Breast epithelium (tissue), 4 donors: ENCODE measurements at regions of chr16 and their contacts with region 1.

Region 1: GRCh38 chr16:58225964-58226602 is 28.2 kb upstream of the CSNK2A2 start:
- DNase-seq: no peak
- H3K4me3 ChIP-seq: no peak overlapping the region
- H3K27ac ChIP-seq: no peak overlapping the region
- H3K4me1 ChIP-seq: no peaks in the 10 kb centered on the region
- H3K27me3 ChIP-seq: no peaks in the 10 kb centered on the region
- CTCF ChIP-seq: no peak
- POLR2A ChIP-seq: no peak

Region 2: GRCh38 chr16:57748596-57748995 is 477.5 kb before region 1 on chr16:
- intact Hi-C with region 1: loop called (anchors 5 kb)
- DNase-seq: no peak
- H3K4me3 ChIP-seq: no peak overlapping the region
- H3K27ac ChIP-seq: no peak overlapping the region
- H3K4me1 ChIP-seq: no peaks in the 10 kb centered on the region
- H3K27me3 ChIP-seq: no peaks in the 10 kb centered on the region
- CTCF ChIP-seq: no peak
- POLR2A ChIP-seq: no peak

Region 3: DNA sequence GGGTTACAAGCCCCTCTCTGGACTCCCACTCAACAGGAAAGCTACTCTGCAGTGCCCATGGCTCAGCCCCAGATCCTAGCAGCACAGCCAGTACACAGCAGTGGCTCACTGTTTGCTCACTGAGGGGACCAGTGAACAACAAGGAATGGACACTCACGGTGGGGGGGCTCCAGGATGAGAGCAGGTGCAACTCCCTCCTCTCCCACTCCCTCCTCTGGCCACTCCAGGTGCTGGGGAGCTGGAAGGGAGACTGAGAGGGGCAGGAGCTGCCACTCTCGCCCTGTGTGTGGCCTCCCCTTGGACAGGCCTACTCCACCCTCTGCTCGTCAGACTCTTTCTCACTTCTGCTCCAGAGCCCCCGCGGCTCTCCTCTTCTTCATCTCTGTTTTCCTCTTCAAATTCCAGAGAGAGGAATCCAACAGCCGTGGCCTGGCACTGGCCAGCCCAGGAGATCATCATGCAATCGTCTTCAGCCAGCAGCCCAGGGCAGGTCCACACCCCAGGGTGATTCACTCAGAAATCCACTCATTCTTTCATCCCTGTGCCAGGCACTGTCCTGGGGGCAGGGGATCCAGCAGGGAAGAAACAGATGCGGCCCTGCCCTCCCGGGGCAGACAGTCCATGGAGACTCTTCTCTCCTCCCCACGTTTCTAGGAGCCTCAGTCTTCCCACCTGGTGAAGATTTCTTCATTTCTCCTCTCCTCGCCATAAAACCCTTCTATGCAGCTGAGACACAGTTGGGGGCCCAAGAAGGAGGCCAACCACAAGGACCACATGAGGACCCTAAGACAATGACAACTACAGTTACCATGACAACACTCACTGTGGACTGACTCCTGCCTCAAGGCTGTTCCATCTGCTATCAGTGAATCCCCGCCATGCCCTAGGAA is 127.6 kb before region 1 on chr16:
- intact Hi-C with region 1: no loop called
- DNase-seq: no peak
- H3K4me3 ChIP-seq: no peak overlapping the region
- H3K27ac ChIP-seq: no peak overlapping the region
- H3K4me1 ChIP-seq: no peaks in the 10 kb centered on the region
- H3K27me3 ChIP-seq: no peaks in the 10 kb centered on the region
- CTCF ChIP-seq: no peak
- POLR2A ChIP-seq: no peak